MCF 10A (cell line): ENCODE measurements at regions of chr14 and their contacts with region 1.

Region 1: GRCh38 chr14:103067233-103067954 is 10.0 kb upstream of the CDC42BPB start:
- DNase-seq: peak; percentile 86
- H3K4me3 Mint-ChIP-seq: peak overlapping the region; percentile 13
- H3K27ac Mint-ChIP-seq: peak overlapping the region; percentile 98
- H3K4me1 Mint-ChIP-seq: peaks cover 19% of the 10 kb centered on the region
- H3K27me3 Mint-ChIP-seq: no peaks in the 10 kb centered on the region
- CTCF ChIP-seq: no peak

Region 2: GRCh38 chr14:103014466-103015319 is 52.7 kb before region 1 on chr14:
- CTCF ChIA-PET with region 1: interaction called, 3 read pairs
- POLR2A ChIA-PET with region 1: interaction called, 5 read pairs
- intact Hi-C with region 1: loop called (anchors 2 kb)
- DNase-seq: peak; percentile 39
- H3K4me3 Mint-ChIP-seq: peak overlapping the region; percentile 50
- H3K27ac Mint-ChIP-seq: peak overlapping the region; percentile 82
- H3K4me1 Mint-ChIP-seq: peaks cover 50% of the 10 kb centered on the region
- H3K27me3 Mint-ChIP-seq: no peaks in the 10 kb centered on the region
- CTCF ChIP-seq: no peak

Region 3: GRCh38 chr14:103185051-103185992 is 117.9 kb after region 1 on chr14:
- CTCF ChIA-PET with region 1: no interaction called
- POLR2A ChIA-PET with region 1: no interaction called
- intact Hi-C with region 1: no loop called
- DNase-seq: peak; percentile 67
- H3K4me3 Mint-ChIP-seq: no peak overlapping the region
- H3K27ac Mint-ChIP-seq: peak overlapping the region; percentile 78
- H3K4me1 Mint-ChIP-seq: peaks cover 5% of the 10 kb centered on the region
- H3K27me3 Mint-ChIP-seq: no peaks in the 10 kb centered on the region
- CTCF ChIP-seq: peak; percentile 59